GM12878 (cell line): ENCODE measurements at regions of chr1 and their contacts with region 1.

Region 1: GRCh38 chr1:21200767-21201166 is 24.1 kb upstream of the EIF4G3 start:
- DNase-seq: no peak
- ATAC-seq: no peak
- H3K4me3 ChIP-seq: no peak overlapping the region
- H3K27ac ChIP-seq: no peak overlapping the region
- H3K4me1 ChIP-seq: no peaks in the 10 kb centered on the region
- H3K27me3 ChIP-seq: no peaks in the 10 kb centered on the region
- CTCF ChIP-seq: no peak
- EP300 ChIP-seq: no peak
- POLR2A ChIP-seq: no peak
- RAD21 ChIP-seq: no peak

Region 2: GRCh38 chr1:20696397-20697329 is 504.1 kb before region 1 on chr1:
- CTCF ChIA-PET with region 1: interaction called, 120 read pairs
- POLR2A ChIA-PET with region 1: no interaction called
- RAD21 ChIA-PET with region 1: interaction called, 43 read pairs
- SMC1A ChIA-PET with region 1: interaction called, 33 read pairs
- in situ Hi-C with region 1: no loop called
- intact Hi-C with region 1: loop called (anchors 2 kb)
- DNase-seq: peak; percentile 1
- ATAC-seq: peak; percentile 99
- H3K4me3 ChIP-seq: peak overlapping the region; percentile 94
- H3K27ac ChIP-seq: no peak overlapping the region
- H3K4me1 ChIP-seq: peaks cover 6% of the 10 kb centered on the region
- H3K27me3 ChIP-seq: no peaks in the 10 kb centered on the region
- CTCF ChIP-seq: peak; percentile 73 to 97 (median 89)
- EP300 ChIP-seq: no peak
- POLR2A ChIP-seq: no peak
- RAD21 ChIP-seq: peak; percentile 81

Region 3: GRCh38 chr1:20932437-20932977 is 268.3 kb before region 1 on chr1:
- CTCF ChIA-PET with region 1: interaction called, 22 read pairs
- POLR2A ChIA-PET with region 1: no interaction called
- RAD21 ChIA-PET with region 1: interaction called, 10 read pairs
- SMC1A ChIA-PET with region 1: interaction called, 7 read pairs
- in situ Hi-C with region 1: no loop called
- intact Hi-C with region 1: no loop called
- DNase-seq: peak; percentile 27
- ATAC-seq: peak; percentile 89
- H3K4me3 ChIP-seq: 0 out of 2 replicates have a peak overlapping the region, but pooled peaks have one; percentile 7
- H3K27ac ChIP-seq: peak overlapping the region; percentile 16; the same call in 1 of the 2 replicates
- H3K4me1 ChIP-seq: peaks cover 15% of the 10 kb centered on the region
- H3K27me3 ChIP-seq: no peaks in the 10 kb centered on the region
- CTCF ChIP-seq: peak in 1 of 3 experiments; percentile 10; a peak in 1 of 6 replicates
- EP300 ChIP-seq: peak in 1 of 2 experiments; percentile 9; a peak in 1 of 4 replicates
- POLR2A ChIP-seq: no peak
- RAD21 ChIP-seq: no peak

Region 4: DNA sequence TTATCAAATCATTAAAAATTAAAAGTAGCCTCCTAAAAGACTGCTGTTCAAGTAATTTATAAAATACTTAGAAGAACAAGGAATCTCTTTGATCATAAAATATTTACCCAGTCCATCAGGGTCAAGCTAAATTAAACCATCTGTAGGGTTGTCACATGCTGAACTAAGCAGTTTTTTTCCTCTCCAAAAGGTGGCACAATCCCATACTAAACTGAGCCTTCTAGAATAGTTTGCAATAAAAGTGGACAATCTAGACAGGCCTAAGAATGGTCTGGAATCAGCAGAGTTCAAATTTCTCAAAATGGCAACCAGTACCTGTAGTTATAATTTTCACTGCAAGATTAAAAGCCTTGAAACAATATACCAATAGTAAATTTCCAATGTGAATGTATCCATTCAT is 218.9 kb before region 1 on chr1:
- CTCF ChIA-PET with region 1: interaction called, 98 read pairs
- POLR2A ChIA-PET with region 1: interaction called, 4 read pairs
- RAD21 ChIA-PET with region 1: interaction called, 45 read pairs
- SMC1A ChIA-PET with region 1: interaction called, 43 read pairs
- in situ Hi-C with region 1: loop called (anchors 10 kb)
- intact Hi-C with region 1: loop called (anchors 1 kb)
- DNase-seq: no peak
- ATAC-seq: peak; percentile 61; the same call in 2 of the 3 replicates
- H3K4me3 ChIP-seq: no peak overlapping the region
- H3K27ac ChIP-seq: no peak overlapping the region
- H3K4me1 ChIP-seq: no peaks in the 10 kb centered on the region
- H3K27me3 ChIP-seq: no peaks in the 10 kb centered on the region
- CTCF ChIP-seq: peak; percentile 33 to 51 (median 33); a peak in 4 of 6 replicates
- EP300 ChIP-seq: no peak
- POLR2A ChIP-seq: no peak
- RAD21 ChIP-seq: peak; percentile 54

Region 5: DNA sequence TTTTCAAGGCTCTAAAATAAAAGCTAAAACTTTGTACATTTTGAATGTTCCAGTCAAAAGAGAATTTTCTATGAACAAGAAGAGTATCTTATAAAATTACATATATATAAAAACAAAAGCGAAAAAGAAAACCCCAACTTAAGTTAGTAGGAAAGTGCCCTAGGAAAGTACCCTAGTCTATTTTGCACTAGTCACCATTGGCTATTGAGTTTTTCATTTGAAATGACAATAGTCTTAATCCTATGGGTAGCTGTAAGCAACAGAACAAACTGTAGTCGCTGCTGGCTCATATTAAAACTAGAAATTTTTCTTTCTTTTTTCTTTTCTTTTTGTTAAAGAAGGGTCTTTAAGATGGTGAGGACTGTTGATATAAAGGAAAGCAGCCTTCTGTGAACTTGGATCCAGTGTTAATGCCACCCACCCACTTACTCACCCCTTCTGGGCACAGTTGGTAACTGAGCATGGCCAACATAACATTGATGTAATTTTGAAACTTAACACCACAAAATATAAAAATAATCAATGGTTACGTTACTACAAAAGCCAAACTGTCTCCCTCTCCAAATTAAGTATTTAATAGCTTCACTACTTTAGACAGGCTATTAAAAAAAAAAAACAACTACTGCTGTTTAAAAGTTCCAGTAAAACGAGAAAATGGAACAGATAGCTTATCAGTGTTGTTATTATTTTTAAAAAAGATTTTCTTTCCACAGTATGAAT is 201.1 kb before region 1 on chr1:
- CTCF ChIA-PET with region 1: interaction called, 11 read pairs
- POLR2A ChIA-PET with region 1: no interaction called
- RAD21 ChIA-PET with region 1: no interaction called
- SMC1A ChIA-PET with region 1: no interaction called
- in situ Hi-C with region 1: no loop called
- intact Hi-C with region 1: no loop called
- DNase-seq: no peak
- ATAC-seq: peak; percentile 70
- H3K4me3 ChIP-seq: no peak overlapping the region
- H3K27ac ChIP-seq: peak overlapping the region; percentile 21; the same call in 1 of the 2 replicates
- H3K4me1 ChIP-seq: peaks cover 12% of the 10 kb centered on the region
- H3K27me3 ChIP-seq: no peaks in the 10 kb centered on the region
- CTCF ChIP-seq: no peak
- EP300 ChIP-seq: no peak
- POLR2A ChIP-seq: no peak
- RAD21 ChIP-seq: no peak

Region 6: DNA sequence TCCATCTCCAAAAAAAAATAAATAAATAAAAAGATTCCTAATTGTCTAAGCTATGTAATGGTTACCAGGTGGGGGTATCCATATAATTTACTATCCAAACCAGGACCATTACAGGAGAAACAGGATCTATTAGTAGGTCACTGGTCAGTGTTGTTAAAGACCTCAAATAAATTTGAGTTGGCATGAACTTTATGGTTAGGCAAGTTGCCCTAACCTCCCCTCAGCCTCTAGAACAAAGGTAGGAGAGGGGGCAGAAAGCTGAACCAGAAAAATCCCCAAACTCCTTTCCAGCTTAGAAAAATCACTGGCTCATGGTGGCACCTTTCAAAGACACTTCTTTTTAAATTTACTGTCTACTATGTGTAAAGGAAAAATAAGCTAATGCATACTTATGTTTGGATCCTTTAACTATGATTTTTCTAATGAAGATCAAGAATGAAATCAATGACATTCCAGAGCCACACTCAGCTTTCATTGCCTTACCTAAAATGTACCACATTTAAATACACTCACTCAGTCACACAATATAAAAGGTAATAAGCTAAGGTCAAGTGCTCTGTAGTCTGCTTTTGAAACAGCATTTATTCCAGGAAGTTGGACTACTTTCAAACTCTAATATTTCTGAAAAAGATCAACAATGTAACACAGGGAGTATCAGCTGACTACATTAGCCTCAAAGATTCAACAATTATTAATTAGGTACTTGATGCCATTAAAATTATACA is 37.9 kb before region 1 on chr1:
- CTCF ChIA-PET with region 1: interaction called, 10 read pairs
- POLR2A ChIA-PET with region 1: no interaction called
- RAD21 ChIA-PET with region 1: no interaction called
- SMC1A ChIA-PET with region 1: no interaction called
- in situ Hi-C with region 1: no loop called
- intact Hi-C with region 1: no loop called
- DNase-seq: no peak
- ATAC-seq: no peak
- H3K4me3 ChIP-seq: no peak overlapping the region
- H3K27ac ChIP-seq: no peak overlapping the region
- H3K4me1 ChIP-seq: no peaks in the 10 kb centered on the region
- H3K27me3 ChIP-seq: no peaks in the 10 kb centered on the region
- CTCF ChIP-seq: no peak
- EP300 ChIP-seq: no peak
- POLR2A ChIP-seq: no peak
- RAD21 ChIP-seq: no peak

Region 7: DNA sequence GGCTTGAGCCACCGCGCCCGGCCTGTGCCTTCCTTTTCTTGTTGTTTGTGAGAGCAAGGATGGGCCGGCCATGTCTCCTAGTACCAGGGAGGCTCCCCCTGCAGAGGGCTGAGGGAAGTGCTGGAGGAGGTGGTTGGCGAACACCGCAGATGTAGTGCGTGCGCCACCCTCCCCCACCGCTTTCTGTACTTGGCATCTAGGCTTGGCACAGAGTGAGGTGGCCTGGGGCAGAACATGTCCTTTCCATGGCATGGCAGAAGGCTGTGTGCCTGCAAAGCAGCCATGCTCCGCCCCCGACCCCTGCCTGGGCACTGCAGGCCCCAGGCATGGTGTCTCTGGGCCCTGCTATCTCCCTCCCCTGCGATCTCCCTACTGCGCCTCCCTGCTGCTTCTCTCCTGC is 339.2 kb after region 1 on chr1:
- CTCF ChIA-PET with region 1: no interaction called
- POLR2A ChIA-PET with region 1: no interaction called
- RAD21 ChIA-PET with region 1: no interaction called
- SMC1A ChIA-PET with region 1: no interaction called
- in situ Hi-C with region 1: no loop called
- intact Hi-C with region 1: no loop called
- DNase-seq: no peak
- ATAC-seq: peak; percentile 27; the same call in 1 of the 3 replicates
- H3K4me3 ChIP-seq: no peak overlapping the region
- H3K27ac ChIP-seq: no peak overlapping the region
- H3K4me1 ChIP-seq: no peaks in the 10 kb centered on the region
- H3K27me3 ChIP-seq: no peaks in the 10 kb centered on the region; a peak in 1 of 4 replicates
- CTCF ChIP-seq: peak in 1 of 3 experiments; percentile 17; a peak in 2 of 6 replicates
- EP300 ChIP-seq: no peak
- POLR2A ChIP-seq: no peak
- RAD21 ChIP-seq: no peak